Right ventricle myocardium inferior (tissue), 1 donor: ENCODE measurements at regions of chr6 and their contacts with region 1.

Region 1: DNA sequence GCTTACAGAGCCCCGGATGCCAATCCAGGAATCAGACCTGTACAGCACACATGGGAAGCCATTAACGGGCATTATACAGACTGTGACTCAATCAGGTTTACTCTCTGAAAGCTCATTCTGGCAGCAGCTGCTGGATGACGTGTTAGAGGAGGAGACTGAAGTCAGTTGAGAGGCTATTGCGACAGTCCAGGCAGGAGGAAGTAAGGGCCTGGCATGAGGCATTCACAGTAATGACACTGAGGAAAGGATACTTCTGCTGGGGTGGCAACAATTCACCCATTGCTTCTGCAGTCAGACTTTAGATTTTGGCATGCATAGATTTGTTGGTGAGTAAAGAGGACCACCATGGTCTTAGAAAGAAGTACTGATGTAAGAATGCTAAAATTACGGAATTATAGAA is 151.0 kb upstream of the HEY2 start:
- DNase-seq: peak; percentile 73
- ATAC-seq: peak; percentile 77

Region 2: GRCh38 chr6:125363039-125363823 is 235.2 kb before region 1 on chr6:
- intact Hi-C with region 1: loop called (anchors 10 kb)
- DNase-seq: peak; percentile 82
- ATAC-seq: peak; percentile 87

Region 3: GRCh38 chr6:125533710-125534397 is 64.6 kb before region 1 on chr6:
- intact Hi-C with region 1: no loop called
- DNase-seq: no peak
- ATAC-seq: no peak

Region 4: GRCh38 chr6:125699591-125699990 is 101.2 kb after region 1 on chr6:
- intact Hi-C with region 1: no loop called
- DNase-seq: no peak
- ATAC-seq: no peak